ENCODE measurements at regions of chr1 and their contacts with region 1.

Region 1: DNA sequence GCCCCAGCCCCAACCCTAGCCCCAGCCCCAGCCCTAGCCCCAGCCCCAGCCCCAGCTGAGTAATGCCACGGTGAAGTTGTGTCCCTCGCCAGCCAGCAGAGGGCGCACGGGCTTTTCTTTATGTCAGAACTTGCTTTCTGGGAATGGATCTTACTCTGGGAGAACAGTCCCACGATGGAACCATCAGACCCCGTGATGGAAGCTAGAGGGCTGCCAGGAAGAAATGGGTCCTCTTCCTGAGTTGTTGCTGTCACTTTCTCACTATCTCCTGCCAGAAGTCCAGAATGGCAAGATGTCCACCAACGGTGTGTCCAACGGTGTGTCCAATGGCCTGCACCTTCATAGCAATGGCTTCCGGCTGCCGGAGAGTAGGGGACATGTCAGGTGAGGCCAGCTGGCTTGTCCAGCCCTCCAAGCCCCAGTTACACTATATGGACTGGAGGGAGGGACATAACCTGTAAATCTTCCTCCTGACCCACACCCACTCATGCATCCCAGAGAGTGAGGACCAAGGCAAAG is 25.1 kb upstream of the TMEM222 start:
- DNase-seq: peak; percentile 65
- H3K4me3 Mint-ChIP-seq: no peak overlapping the region
- H3K27ac Mint-ChIP-seq: no peak overlapping the region
- H3K4me1 Mint-ChIP-seq: no peaks in the 10 kb centered on the region
- H3K27me3 Mint-ChIP-seq: no peaks in the 10 kb centered on the region
- CTCF ChIP-seq: peak; percentile 24

Region 2: DNA sequence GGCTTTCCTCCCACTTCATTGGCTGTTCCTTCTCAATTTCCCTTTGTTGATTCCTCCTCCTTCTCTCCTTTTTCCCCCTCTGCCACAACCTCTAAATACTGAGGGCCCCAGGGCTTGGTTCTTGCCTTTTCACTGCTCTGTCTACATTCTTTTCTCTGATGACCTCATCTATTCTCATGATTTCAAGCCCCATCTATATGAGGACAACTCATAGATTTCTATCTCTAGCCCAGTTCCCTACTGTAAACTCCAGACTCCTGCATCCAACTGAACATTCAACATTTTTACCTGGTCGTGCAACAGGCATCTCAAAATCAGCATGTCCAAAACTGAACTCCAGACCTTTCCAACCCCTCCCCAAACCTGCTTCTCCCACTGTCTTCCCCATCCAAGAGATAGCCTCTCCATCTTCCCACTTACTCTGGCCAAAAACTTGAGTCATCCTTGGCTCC is 130.5 kb before region 1 on chr1:
- CTCF ChIA-PET with region 1: interaction called, 10 read pairs
- intact Hi-C with region 1: no loop called
- DNase-seq: no peak
- H3K4me3 Mint-ChIP-seq: no peak overlapping the region
- H3K27ac Mint-ChIP-seq: no peak overlapping the region
- H3K4me1 Mint-ChIP-seq: peaks cover 11% of the 10 kb centered on the region
- H3K27me3 Mint-ChIP-seq: no peaks in the 10 kb centered on the region
- CTCF ChIP-seq: no peak

Region 3: DNA sequence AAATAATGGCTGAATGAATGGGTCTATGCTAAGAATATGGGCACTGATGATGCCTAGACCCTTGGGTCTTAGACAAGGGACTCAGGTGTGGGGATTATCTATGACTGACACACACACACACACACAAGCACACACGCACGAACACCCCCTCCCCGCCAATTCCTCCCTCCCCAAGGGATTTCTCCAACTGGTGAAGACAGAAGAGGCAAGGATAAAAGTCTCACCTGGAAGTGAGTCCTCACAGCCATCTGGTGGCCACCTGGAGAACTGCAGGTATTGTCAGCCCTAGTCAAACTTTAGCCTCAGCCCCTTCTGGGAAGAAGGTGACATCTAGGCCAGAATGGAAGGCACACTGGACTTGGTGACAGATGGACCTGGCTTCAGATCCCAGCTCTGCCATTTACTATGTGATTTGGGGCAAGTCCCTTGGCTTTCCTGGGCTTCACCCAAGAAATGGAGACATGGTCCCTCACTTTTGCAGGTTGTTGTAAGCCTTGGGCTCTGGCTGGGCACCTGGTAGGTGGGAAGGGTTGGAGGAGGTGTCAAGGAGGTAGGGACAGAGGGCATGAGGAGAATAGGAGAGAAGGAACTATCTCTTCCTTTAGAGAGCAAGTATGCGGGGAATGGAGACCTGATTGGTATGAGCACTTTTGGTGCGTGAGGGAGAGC is 91.6 kb after region 1 on chr1:
- CTCF ChIA-PET with region 1: interaction called, 8 read pairs
- intact Hi-C with region 1: loop called (anchors 5 kb)
- DNase-seq: peak; percentile 80
- H3K4me3 Mint-ChIP-seq: no peak overlapping the region
- H3K27ac Mint-ChIP-seq: no peak overlapping the region
- H3K4me1 Mint-ChIP-seq: peaks cover 19% of the 10 kb centered on the region
- H3K27me3 Mint-ChIP-seq: peaks cover 49% of the 10 kb centered on the region
- CTCF ChIP-seq: peak; percentile 61

Measured in Calu3 (cell line).